ENCODE measurements at regions of chr5 and their contacts with region 1.

Region 1: GRCh38 chr5:150449517-150450339 is at the start of gene RPS14:
- DNase-seq: peak; percentile 91 to 95 (median 92)
- H3K4me3 ChIP-seq: peak within 1 kb of the TSS; percentile 79 to 95 (median 95)
- H3K4me3 Mint-ChIP-seq: peak within 1 kb of the TSS; percentile 95 to 98
- H3K27ac ChIP-seq: peak within 1 kb of the TSS; percentile 93 to 97
- H3K27ac Mint-ChIP-seq: peak within 1 kb of the TSS; percentile 99 to 100 (median 100)
- H3K4me1 ChIP-seq: peaks cover 34 to 35% of the 10 kb centered on the region in 2 donors
- H3K4me1 Mint-ChIP-seq: peaks cover 21% of the 10 kb centered on the region
- H3K27me3 ChIP-seq: no peaks in the 10 kb centered on the region
- H3K27me3 Mint-ChIP-seq: no peaks in the 10 kb centered on the region
- CTCF ChIP-seq: peak; percentile 97
- polyA plus RNA-seq, gene RPS14: 2,768 to 4,675 (median 3,499) TPM

Region 2: DNA sequence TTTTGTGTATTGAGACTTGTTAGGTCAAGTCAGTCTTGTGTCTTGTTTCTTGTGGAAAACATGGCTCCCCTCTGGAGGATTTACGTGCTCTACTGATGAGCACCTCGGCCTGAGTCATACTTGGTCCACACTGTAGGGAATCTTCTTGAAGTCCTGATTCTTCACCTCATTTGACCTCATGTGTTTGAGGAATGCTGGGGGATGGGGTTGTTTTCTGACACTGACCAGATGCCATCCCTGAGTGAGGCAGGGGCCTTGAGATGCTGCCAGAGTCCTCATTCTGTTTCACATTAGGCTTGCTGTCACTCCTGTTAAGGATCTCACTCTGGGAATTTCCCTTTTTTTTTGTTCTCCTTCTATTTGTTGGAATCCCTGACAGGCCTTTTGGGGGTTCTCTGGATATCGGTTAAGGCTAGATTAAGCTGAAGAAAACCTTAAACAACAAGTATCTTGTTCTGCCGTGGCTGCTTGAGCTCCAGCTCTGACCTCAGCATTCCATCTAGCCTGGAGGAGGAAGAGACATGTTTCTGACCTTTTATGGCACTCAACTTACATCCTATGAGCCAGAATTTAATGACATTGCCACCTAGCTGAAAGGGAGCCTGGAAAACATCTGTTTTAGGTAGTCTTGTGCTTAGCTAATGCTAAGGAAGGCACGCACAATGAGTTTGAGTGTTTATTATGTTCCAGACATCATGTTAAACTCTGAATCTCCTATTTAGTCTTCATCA is 71.6 kb before region 1 on chr5:
- intact Hi-C with region 1: no loop called
- DNase-seq: no peak
- H3K4me3 ChIP-seq: no peak overlapping the region
- H3K4me3 Mint-ChIP-seq: no peak overlapping the region
- H3K27ac ChIP-seq: peak overlapping the region in 1 of 2 donors; percentile 20
- H3K27ac Mint-ChIP-seq: peak overlapping the region in 2 of 7 donors; percentile 26 to 51
- H3K4me1 ChIP-seq: no peaks in the 10 kb centered on the region
- H3K4me1 Mint-ChIP-seq: no peaks in the 10 kb centered on the region
- H3K27me3 ChIP-seq: no peaks in the 10 kb centered on the region
- H3K27me3 Mint-ChIP-seq: peaks cover 0 to 2% (median 0%) of the 10 kb centered on the region in 3 donors
- CTCF ChIP-seq: no peak

Region 3: DNA sequence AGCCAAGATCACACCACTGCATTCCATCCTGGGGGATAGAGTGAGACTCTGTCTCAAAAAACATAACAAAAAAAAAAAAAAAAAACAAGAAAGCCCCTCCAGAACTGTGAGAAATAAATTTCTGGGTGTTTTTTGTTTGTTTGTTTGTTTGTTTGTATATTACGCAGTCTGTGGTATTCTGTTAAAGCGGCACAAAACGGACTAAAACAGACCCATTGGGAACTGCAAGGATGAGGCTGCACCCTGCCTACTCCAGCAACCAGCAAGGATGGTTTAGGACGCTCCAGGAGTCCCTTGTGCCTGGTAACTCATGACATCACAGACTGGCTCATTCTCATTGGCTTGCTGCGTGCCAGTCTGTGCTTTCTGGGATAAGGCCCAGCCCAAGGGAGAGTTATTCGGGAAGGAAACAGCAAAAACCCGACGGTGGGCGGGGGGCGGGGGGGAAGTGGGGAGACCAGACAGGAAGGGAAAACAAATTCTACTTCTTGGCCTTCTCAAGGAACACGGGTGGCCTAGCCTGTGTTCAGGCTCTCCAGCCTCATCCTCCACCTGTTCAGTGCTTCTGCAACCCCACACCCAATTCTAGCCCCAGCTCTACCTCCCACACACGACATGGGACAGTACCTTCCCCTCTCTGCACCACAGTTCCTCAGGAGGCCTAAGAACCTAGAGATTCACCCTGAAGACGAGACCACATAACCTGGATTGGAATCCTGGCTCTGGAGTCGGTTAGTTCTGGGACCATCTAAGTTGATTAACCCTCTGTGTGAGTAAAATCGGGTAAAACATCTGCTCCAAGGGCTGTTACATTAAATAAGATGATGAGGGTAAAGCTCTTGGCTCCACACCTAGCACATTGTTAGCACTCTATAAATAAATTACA is 39.8 kb before region 1 on chr5:
- intact Hi-C with region 1: loop called (anchors 5 kb)
- DNase-seq: peak; percentile 69 to 86 (median 85)
- H3K4me3 ChIP-seq: peak overlapping the region; percentile 98 to 100 (median 100)
- H3K4me3 Mint-ChIP-seq: peak overlapping the region; percentile 97 to 99
- H3K27ac ChIP-seq: peak overlapping the region; percentile 98 to 99
- H3K27ac Mint-ChIP-seq: peak overlapping the region; percentile 98 to 100 (median 99)
- H3K4me1 ChIP-seq: peaks cover 44 to 63% of the 10 kb centered on the region in 2 donors
- H3K4me1 Mint-ChIP-seq: peaks cover 51% of the 10 kb centered on the region
- H3K27me3 ChIP-seq: no peaks in the 10 kb centered on the region
- H3K27me3 Mint-ChIP-seq: peaks cover 0 to 12% (median 0%) of the 10 kb centered on the region in 3 donors
- CTCF ChIP-seq: no peak

Region 4: GRCh38 chr5:150428106-150428876 is 21.4 kb before region 1 on chr5:
- intact Hi-C with region 1: no loop called
- DNase-seq: no peak
- H3K4me3 ChIP-seq: no peak overlapping the region
- H3K4me3 Mint-ChIP-seq: no peak overlapping the region
- H3K27ac ChIP-seq: no peak overlapping the region
- H3K27ac Mint-ChIP-seq: peak overlapping the region in 4 of 7 donors; percentile 16 to 71 (median 42)
- H3K4me1 ChIP-seq: peaks cover 8 to 9% of the 10 kb centered on the region in 2 donors
- H3K4me1 Mint-ChIP-seq: peaks cover 14% of the 10 kb centered on the region
- H3K27me3 ChIP-seq: no peaks in the 10 kb centered on the region
- H3K27me3 Mint-ChIP-seq: peaks cover 1 to 9% (median 2%) of the 10 kb centered on the region in 3 donors
- CTCF ChIP-seq: no peak

Region 5: GRCh38 chr5:150486402-150487198 is 36.9 kb after region 1 on chr5:
- intact Hi-C with region 1: loop called in 1 of 2 experiments (anchors 5 kb)
- DNase-seq: peak in 2 of 3 donors; percentile 25 to 43
- H3K4me3 ChIP-seq: peak overlapping the region; percentile 78 to 96 (median 92)
- H3K4me3 Mint-ChIP-seq: peak overlapping the region; percentile 78 to 92
- H3K27ac ChIP-seq: peak overlapping the region; percentile 96 to 97
- H3K27ac Mint-ChIP-seq: peak overlapping the region; percentile 93 to 99 (median 97)
- H3K4me1 ChIP-seq: peaks cover 56 to 59% of the 10 kb centered on the region in 2 donors
- H3K4me1 Mint-ChIP-seq: peaks cover 58% of the 10 kb centered on the region
- H3K27me3 ChIP-seq: no peaks in the 10 kb centered on the region
- H3K27me3 Mint-ChIP-seq: peaks cover 0 to 3% (median 3%) of the 10 kb centered on the region in 3 donors
- CTCF ChIP-seq: no peak

Region 6: DNA sequence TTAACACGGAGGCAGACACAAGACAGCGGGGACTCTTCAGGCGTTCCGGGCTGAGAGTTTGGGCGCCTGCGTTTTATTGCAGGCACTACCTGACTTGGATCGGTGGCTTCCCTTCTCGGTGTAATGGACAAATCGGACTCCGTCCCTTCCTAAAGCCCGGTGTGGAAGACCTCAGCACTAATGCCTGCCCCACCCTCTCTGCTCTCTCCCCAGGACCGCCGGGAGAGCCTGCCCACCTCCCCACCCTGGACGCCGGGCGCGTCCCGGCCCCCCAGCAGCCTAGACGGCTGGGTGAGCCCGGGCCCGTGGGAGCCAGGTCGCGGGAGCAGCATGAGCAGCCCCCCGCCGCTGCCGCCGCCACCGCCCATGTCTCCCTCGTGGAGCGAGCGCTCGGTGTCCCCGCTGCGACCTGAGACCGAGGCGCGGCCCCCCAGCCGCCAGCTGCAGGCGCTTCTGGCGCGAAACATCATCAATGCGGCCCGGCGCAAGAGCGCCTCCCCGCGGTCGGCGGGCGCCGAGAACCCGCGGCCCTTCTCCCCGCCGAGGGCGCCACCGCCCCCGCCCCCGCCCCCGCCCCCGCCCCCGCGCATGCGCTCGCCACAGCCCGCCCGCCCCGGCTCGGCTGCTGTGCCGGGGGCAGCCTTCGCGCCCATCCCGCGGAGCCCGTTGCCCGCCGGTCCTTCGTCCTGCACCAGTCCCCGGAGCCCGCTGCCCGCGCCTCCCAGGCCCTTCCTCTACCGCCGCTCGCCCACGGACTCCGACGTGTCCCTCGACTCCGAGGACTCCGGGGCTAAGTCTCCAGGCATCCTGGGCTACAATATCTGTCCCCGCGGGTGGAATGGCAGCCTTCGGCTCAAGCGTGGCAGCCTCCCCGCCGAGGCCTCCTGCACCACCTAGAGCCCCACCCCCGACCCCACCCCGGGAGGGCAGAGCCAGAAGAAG is 206.7 kb after region 1 on chr5:
- intact Hi-C with region 1: loop called in 1 of 2 experiments (anchors 10 kb)
- DNase-seq: peak; percentile 51 to 60 (median 56)
- H3K4me3 ChIP-seq: peak overlapping the region; percentile 43 to 79 (median 53)
- H3K4me3 Mint-ChIP-seq: peak overlapping the region; percentile 74 to 83
- H3K27ac ChIP-seq: no peak overlapping the region
- H3K27ac Mint-ChIP-seq: no peak overlapping the region
- H3K4me1 ChIP-seq: peaks cover 9 to 14% of the 10 kb centered on the region in 2 donors
- H3K4me1 Mint-ChIP-seq: peaks cover 9% of the 10 kb centered on the region
- H3K27me3 ChIP-seq: peaks cover 0 to 4% of the 10 kb centered on the region in 2 donors
- H3K27me3 Mint-ChIP-seq: peaks cover 6 to 15% (median 11%) of the 10 kb centered on the region in 3 donors
- CTCF ChIP-seq: peak; percentile 77